CD8-positive, alpha-beta T cell (primary cell): ENCODE measurements at regions of chr6 and their contacts with region 1.

Region 1: DNA sequence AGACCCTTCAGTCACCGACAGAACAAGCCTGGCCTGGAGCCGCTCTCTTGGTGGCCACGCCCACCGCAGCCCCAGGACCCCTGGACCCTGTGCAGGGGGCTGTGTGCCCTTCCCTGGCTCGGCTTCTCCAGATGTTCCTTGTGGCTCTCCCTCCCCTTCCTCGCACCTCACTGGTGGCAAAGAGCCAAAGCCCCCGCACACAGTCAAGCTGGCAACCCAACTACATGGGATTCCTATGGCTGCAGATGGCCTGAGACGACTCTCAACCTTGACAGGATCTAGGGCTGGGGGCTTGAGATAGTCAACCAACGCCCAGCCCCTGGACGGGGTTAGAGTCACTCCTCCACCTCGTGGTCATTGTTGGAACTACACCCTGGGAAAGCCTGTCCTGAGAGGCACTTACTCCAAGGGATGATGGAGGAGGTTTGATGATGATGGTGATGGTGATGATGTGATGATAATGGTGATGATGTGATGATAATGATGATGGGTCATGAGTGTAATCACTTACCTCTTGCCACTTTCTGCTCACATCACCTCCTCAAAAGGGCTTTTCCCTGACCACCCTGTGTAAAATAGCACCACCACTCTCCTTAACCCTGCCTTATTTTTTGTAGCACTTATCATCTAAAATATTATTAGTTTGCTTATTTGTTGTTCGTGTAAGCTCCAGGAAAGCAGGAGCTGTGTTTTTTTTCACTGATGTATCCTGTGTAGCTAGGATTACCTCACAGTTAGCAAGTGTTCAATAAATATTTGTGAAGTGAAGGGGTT is 278.4 kb downstream of the LRFN2 start:
- DNase-seq: peak; percentile 6 to 57 (median 45)
- ATAC-seq: no peak
- H3K4me3 ChIP-seq: no peak overlapping the region
- H3K4me3 Mint-ChIP-seq: no peak overlapping the region
- H3K27ac ChIP-seq: no peak overlapping the region
- H3K27ac Mint-ChIP-seq: no peak overlapping the region
- H3K4me1 ChIP-seq: no peaks in the 10 kb centered on the region
- H3K4me1 Mint-ChIP-seq: no peaks in the 10 kb centered on the region
- H3K27me3 ChIP-seq: peaks cover 0 to 2% of the 10 kb centered on the region in 2 experiments
- H3K27me3 Mint-ChIP-seq: peaks cover 27% of the 10 kb centered on the region
- CTCF ChIP-seq: peak; percentile 44

Region 2: GRCh38 chr6:38656896-38657295 is 1651.8 kb before region 1 on chr6:
- CTCF ChIA-PET with region 1: no interaction called
- POLR2A ChIA-PET with region 1: no interaction called
- intact Hi-C with region 1: no loop called
- DNase-seq: no peak
- ATAC-seq: no peak
- H3K4me3 ChIP-seq: no peak overlapping the region
- H3K4me3 Mint-ChIP-seq: no peak overlapping the region
- H3K27ac ChIP-seq: no peak overlapping the region
- H3K27ac Mint-ChIP-seq: no peak overlapping the region
- H3K4me1 ChIP-seq: no peaks in the 10 kb centered on the region
- H3K4me1 Mint-ChIP-seq: no peaks in the 10 kb centered on the region
- H3K27me3 ChIP-seq: no peaks in the 10 kb centered on the region
- H3K27me3 Mint-ChIP-seq: no peaks in the 10 kb centered on the region
- CTCF ChIP-seq: no peak

Region 3: GRCh38 chr6:39347906-39348585 is 960.7 kb before region 1 on chr6:
- CTCF ChIA-PET with region 1: no interaction called
- POLR2A ChIA-PET with region 1: no interaction called
- intact Hi-C with region 1: loop called (anchors 2 to 5 kb)
- DNase-seq: peak in 8 of 9 experiments; percentile 5 to 66 (median 48)
- ATAC-seq: peak; percentile 48
- H3K4me3 ChIP-seq: no peak overlapping the region
- H3K4me3 Mint-ChIP-seq: no peak overlapping the region
- H3K27ac ChIP-seq: no peak overlapping the region
- H3K27ac Mint-ChIP-seq: no peak overlapping the region
- H3K4me1 ChIP-seq: no peaks in the 10 kb centered on the region
- H3K4me1 Mint-ChIP-seq: no peaks in the 10 kb centered on the region
- H3K27me3 ChIP-seq: no peaks in the 10 kb centered on the region
- H3K27me3 Mint-ChIP-seq: peaks cover 4% of the 10 kb centered on the region
- CTCF ChIP-seq: peak; percentile 75

Region 4: GRCh38 chr6:39361657-39362486 is 946.8 kb before region 1 on chr6:
- CTCF ChIA-PET with region 1: interaction called, 5 read pairs
- POLR2A ChIA-PET with region 1: no interaction called
- intact Hi-C with region 1: loop called in 1 of 2 experiments (anchors 5 kb)
- DNase-seq: peak in 7 of 9 experiments; percentile 14 to 58 (median 36)
- ATAC-seq: peak; percentile 36
- H3K4me3 ChIP-seq: no peak overlapping the region
- H3K4me3 Mint-ChIP-seq: no peak overlapping the region
- H3K27ac ChIP-seq: no peak overlapping the region
- H3K27ac Mint-ChIP-seq: no peak overlapping the region
- H3K4me1 ChIP-seq: peaks cover 3% of the 10 kb centered on the region
- H3K4me1 Mint-ChIP-seq: peaks cover 2% of the 10 kb centered on the region
- H3K27me3 ChIP-seq: no peaks in the 10 kb centered on the region
- H3K27me3 Mint-ChIP-seq: peaks cover 10% of the 10 kb centered on the region
- CTCF ChIP-seq: peak; percentile 47

Region 5: GRCh38 chr6:39923414-39923813 is 385.3 kb before region 1 on chr6:
- CTCF ChIA-PET with region 1: no interaction called
- POLR2A ChIA-PET with region 1: no interaction called
- intact Hi-C with region 1: no loop called
- DNase-seq: no peak
- ATAC-seq: no peak
- H3K4me3 ChIP-seq: no peak overlapping the region
- H3K4me3 Mint-ChIP-seq: no peak overlapping the region
- H3K27ac ChIP-seq: no peak overlapping the region
- H3K27ac Mint-ChIP-seq: no peak overlapping the region
- H3K4me1 ChIP-seq: peaks cover 11% of the 10 kb centered on the region
- H3K4me1 Mint-ChIP-seq: peaks cover 16% of the 10 kb centered on the region
- H3K27me3 ChIP-seq: no peaks in the 10 kb centered on the region
- H3K27me3 Mint-ChIP-seq: no peaks in the 10 kb centered on the region
- CTCF ChIP-seq: no peak

Region 6: GRCh38 chr6:40336940-40337760 is 28.4 kb after region 1 on chr6:
- CTCF ChIA-PET with region 1: no interaction called
- POLR2A ChIA-PET with region 1: no interaction called
- intact Hi-C with region 1: no loop called
- DNase-seq: no peak
- ATAC-seq: no peak
- H3K4me3 ChIP-seq: no peak overlapping the region
- H3K4me3 Mint-ChIP-seq: no peak overlapping the region
- H3K27ac ChIP-seq: no peak overlapping the region
- H3K27ac Mint-ChIP-seq: no peak overlapping the region
- H3K4me1 ChIP-seq: no peaks in the 10 kb centered on the region
- H3K4me1 Mint-ChIP-seq: no peaks in the 10 kb centered on the region
- H3K27me3 ChIP-seq: no peaks in the 10 kb centered on the region
- H3K27me3 Mint-ChIP-seq: peaks cover 22% of the 10 kb centered on the region
- CTCF ChIP-seq: no peak